ENCODE measurements at regions of chr6 and their contacts with region 1.

Region 1: GRCh38 chr6:142207265-142207877 is 60.3 kb downstream of the VTA1 start:
- DNase-seq: peak in 1 of 2 donors; percentile 22
- H3K4me3 ChIP-seq: no peak overlapping the region
- H3K27ac ChIP-seq: no peak overlapping the region
- H3K4me1 ChIP-seq: peaks cover 0 to 8% (median 0%) of the 10 kb centered on the region in 4 donors
- H3K27me3 ChIP-seq: no peaks in the 10 kb centered on the region
- CTCF ChIP-seq: peak; percentile 70 to 79

Region 2: DNA sequence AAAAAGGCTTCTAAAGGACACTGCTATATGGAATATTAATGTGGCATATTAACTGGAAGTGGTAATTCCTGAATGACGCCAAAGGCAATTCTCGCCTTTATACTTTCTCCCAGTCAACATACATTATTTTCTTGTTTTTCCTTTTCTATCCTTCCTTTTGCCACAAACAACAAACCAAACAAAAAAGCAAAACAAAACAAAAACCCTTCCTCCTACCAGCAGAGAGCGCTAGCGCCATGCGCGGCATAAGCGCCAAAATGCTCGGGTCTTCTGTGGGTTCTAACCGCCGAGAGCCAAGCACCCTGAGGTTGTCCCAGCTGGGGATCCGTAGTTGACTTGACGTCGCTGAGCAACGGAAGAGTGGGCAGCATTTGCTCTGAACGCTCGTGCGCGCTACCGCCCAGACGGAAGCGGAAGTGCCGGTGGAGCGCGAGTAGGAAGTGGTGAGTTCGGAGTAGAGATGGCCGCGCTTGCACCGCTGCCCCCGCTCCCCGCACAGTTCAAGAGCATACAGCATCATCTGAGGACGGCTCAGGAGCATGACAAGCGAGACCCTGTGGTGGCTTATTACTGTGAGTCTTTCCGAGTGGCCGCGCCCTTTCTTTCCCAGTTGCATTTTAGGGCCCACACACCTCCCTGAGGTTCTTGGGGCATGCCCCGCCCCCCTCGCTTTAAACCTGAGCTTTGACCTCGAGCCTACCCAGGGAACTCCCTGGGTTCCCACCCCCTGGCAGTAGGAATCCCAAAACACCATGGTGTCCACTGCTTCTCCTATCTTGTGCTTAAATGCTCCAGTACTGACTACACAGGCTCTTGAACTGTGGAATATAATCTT is 60.3 kb before region 1 on chr6 and contains the starts of genes NMBR and VTA1:
- intact Hi-C with region 1: loop called (anchors 5 kb)
- DNase-seq: peak; percentile 97 to 98
- H3K4me3 ChIP-seq: peak within 1 kb of the TSS; percentile 71 to 89
- H3K27ac ChIP-seq: peak within 1 kb of the TSS; percentile 73 to 86
- H3K4me1 ChIP-seq: peaks cover 0 to 30% (median 13%) of the 10 kb centered on the region in 4 donors
- H3K27me3 ChIP-seq: no peaks in the 10 kb centered on the region
- CTCF ChIP-seq: peak; percentile 88 to 91